Left cardiac atrium (tissue), 4 donors: ENCODE measurements at regions of chr4 and their contacts with region 1.

Region 1: DNA sequence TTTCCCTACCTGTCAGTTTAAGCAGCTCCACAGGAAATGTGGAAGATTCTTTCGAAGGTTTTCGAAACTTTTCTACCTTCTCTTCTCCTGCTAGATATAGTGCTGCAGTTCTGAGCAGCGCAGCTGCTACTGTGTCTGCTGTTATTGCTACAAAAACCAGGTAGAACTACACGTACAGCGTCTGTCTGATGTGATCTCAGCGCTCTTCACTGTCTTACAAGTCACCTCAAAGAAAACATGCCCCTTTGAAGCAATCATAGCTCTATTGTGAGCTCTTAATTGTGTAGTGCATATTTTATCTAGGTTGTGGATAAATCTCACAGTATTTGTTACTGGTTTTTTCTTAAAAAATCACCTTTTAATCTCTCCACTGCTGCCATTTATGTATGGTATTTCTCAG is 147.6 kb upstream of the BMPR1B start:
- DNase-seq: no peak
- ATAC-seq: no peak

Region 2: DNA sequence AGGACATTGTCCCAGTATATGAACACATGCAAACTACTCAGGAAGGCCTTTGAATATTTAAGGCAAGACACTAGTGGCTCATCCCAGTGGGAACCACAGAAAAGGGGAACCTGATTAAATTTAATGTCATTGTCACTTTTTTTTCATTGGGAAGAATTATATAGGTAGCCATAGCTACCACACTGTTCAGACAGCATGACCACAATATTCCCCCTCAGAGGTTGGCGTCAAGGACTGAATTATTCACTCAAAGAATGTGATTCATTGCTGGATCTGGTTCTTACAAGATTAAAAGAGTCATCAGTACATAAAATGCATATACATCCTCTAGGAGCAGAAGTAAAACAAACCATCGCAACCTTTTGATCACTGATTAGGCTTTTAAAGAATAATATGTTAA is 494.5 kb before region 1 on chr4:
- intact Hi-C with region 1: no loop called
- DNase-seq: no peak
- ATAC-seq: no peak

Region 3: GRCh38 chr4:94290245-94290644 is 319.9 kb before region 1 on chr4:
- intact Hi-C with region 1: no loop called
- DNase-seq: no peak
- ATAC-seq: no peak

Region 4: GRCh38 chr4:94649381-94650133 is 39.4 kb after region 1 on chr4:
- intact Hi-C with region 1: no loop called
- DNase-seq: no peak
- ATAC-seq: no peak

Region 5: GRCh38 chr4:95124906-95125504 is 514.9 kb after region 1 on chr4:
- intact Hi-C with region 1: loop called in 1 of 2 experiments (anchors 10 kb)
- DNase-seq: no peak
- ATAC-seq: peak in 1 of 2 donors; percentile 75